Endothelial cell of umbilical vein (primary cell): ENCODE measurements at regions of chr9 and their contacts with region 1.

Region 1: GRCh38 chr9:129177791-129178559 is at the start of gene IER5L:
- DNase-seq: peak; percentile 90
- H3K4me3 ChIP-seq: peak within 1 kb of the TSS; percentile 74 to 81 (median 79)
- H3K27ac ChIP-seq: no peak within 1 kb of the TSS
- H3K4me1 ChIP-seq: peaks cover 21% of the 10 kb centered on the region
- H3K27me3 ChIP-seq: no peaks in the 10 kb centered on the region
- CTCF ChIP-seq: no peak
- POLR2A ChIP-seq: peak; percentile 100
- total RNA-seq, gene IER5L: 12.3 and 13.3 TPM in 2 replicates

Region 2: GRCh38 chr9:129036923-129037766 is 140.8 kb before region 1 on chr9:
- CTCF ChIA-PET with region 1: no interaction called
- POLR2A ChIA-PET with region 1: no interaction called
- dilution Hi-C with region 1: no loop called
- intact Hi-C with region 1: no loop called
- DNase-seq: no peak
- H3K4me3 ChIP-seq: peak overlapping the region; percentile 68 to 98 (median 73)
- H3K27ac ChIP-seq: no peak overlapping the region
- H3K4me1 ChIP-seq: peaks cover 11% of the 10 kb centered on the region
- H3K27me3 ChIP-seq: no peaks in the 10 kb centered on the region
- CTCF ChIP-seq: no peak
- POLR2A ChIP-seq: no peak

Region 3: GRCh38 chr9:129131300-129132145 is 46.5 kb before region 1 on chr9:
- CTCF ChIA-PET with region 1: interaction called, 27 read pairs
- POLR2A ChIA-PET with region 1: no interaction called
- dilution Hi-C with region 1: no loop called
- intact Hi-C with region 1: no loop called
- DNase-seq: peak; percentile 65
- H3K4me3 ChIP-seq: no peak overlapping the region
- H3K27ac ChIP-seq: no peak overlapping the region
- H3K4me1 ChIP-seq: peaks cover 12% of the 10 kb centered on the region
- H3K27me3 ChIP-seq: no peaks in the 10 kb centered on the region
- CTCF ChIP-seq: peak; percentile 96 to 99
- POLR2A ChIP-seq: no peak

Region 4: DNA sequence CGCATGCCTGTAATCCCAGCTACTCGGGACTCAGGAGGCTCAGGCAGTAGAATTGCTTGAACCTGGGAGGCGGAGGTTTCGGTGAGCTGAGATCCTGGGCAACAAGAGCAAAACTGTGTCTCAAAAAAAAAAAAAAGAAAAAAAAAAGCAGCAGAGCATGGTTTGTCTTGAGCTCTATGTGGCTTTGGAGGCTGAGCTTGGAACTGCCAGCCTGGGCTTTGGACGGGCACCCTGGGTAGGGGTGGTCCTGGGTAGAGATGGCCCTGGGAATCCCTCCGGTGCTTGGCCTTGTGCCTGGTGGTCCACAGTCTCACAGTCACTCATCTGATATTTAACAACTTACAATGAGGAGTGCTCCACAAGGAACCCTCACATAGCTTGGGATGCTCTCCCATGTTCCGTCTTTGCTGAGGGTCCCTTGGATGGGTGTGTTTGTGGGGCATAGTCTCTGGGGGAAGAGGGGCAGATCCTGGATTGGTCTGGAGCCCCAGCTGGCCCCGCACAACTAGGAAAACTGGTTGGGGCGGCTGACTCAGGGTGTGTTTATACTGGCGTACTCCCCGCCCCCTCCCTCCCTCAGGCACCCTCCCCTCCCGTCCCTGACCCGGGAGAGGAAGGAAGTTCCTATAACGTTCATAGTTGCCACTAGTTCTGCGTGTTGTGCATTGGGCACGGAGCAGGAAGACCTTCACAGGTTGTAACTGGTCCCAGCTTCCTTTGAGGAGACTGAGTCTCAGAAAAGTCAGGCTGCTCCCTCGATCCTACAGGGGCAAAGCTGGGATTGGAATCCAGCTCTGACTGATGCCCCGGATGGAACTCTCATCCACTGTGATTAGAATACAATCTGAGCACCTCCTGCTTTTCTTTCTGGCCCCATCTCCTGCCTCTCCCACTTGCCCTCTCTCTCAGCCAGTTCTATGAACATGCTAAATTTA is 11.1 kb before region 1 on chr9:
- CTCF ChIA-PET with region 1: interaction called, 16 read pairs
- POLR2A ChIA-PET with region 1: interaction called, 9 read pairs
- dilution Hi-C with region 1: no loop called
- intact Hi-C with region 1: no loop called
- DNase-seq: peak; percentile 90
- H3K4me3 ChIP-seq: no peak overlapping the region
- H3K27ac ChIP-seq: peak overlapping the region; percentile 88
- H3K4me1 ChIP-seq: peaks cover 31% of the 10 kb centered on the region
- H3K27me3 ChIP-seq: no peaks in the 10 kb centered on the region
- CTCF ChIP-seq: no peak
- POLR2A ChIP-seq: peak; percentile 66

Region 5: GRCh38 chr9:129320575-129321263 is 142.7 kb after region 1 on chr9:
- CTCF ChIA-PET with region 1: interaction called, 10 read pairs
- POLR2A ChIA-PET with region 1: interaction called, 3 read pairs
- dilution Hi-C with region 1: no loop called
- intact Hi-C with region 1: loop called (anchors 5 kb)
- DNase-seq: peak; percentile 66
- H3K4me3 ChIP-seq: peak overlapping the region in 2 of 3 experiments; percentile 15 to 29
- H3K27ac ChIP-seq: no peak overlapping the region
- H3K4me1 ChIP-seq: peaks cover 8% of the 10 kb centered on the region
- H3K27me3 ChIP-seq: no peaks in the 10 kb centered on the region
- CTCF ChIP-seq: no peak
- POLR2A ChIP-seq: no peak

Region 6: DNA sequence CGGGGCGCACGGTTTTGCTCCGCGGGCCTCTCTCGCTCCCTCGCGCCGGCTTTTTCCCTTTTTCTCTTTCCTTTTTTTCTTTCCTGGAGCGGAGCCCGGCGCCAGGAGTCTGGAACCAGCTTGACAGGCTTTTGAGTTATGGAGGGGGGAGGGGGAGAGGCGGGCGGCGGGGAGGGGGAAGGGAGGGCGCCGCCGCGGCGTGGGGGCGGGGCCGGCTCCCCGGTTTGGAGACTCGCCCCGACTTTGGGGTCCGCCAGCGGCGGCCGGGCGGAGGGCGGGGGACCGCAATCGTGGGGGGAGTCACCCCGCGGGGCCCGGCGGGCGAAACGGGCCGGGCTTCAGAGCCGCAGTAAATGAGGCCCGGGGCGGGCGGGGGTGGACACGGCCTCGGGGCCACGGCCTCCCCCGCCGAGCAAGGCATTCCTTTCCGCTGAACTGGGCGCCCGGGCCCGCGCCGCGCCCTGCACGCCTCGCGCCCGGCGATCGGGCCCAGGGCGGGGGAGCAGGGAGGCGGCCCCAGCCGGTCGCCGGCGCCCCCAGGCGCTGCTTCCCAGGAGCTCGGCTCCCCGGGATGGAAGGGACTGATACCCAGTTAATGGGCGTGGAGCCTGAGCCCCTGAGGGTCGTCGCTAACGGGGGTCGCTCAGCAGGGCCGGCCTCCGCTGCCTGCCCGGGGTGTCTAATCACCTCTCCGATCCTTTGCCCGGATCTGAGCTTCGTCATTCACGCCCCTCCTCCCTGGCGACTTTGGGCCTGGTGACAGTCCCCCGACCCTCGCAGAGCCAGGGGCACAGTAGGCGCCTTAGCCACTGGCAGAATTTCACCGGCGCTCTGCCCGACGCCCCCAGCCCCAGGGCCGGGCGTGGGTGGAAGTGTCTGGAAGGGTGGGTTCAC is 304.8 kb after region 1 on chr9:
- CTCF ChIA-PET with region 1: interaction called, 20 read pairs
- POLR2A ChIA-PET with region 1: interaction called, 8 read pairs
- dilution Hi-C with region 1: no loop called
- intact Hi-C with region 1: loop called (anchors 2 kb)
- DNase-seq: peak; percentile 69
- H3K4me3 ChIP-seq: peak overlapping the region in 1 of 3 experiments; percentile 40
- H3K27ac ChIP-seq: peak overlapping the region; percentile 93
- H3K4me1 ChIP-seq: peaks cover 31% of the 10 kb centered on the region
- H3K27me3 ChIP-seq: no peaks in the 10 kb centered on the region
- CTCF ChIP-seq: no peak
- POLR2A ChIP-seq: no peak

Region 7: DNA sequence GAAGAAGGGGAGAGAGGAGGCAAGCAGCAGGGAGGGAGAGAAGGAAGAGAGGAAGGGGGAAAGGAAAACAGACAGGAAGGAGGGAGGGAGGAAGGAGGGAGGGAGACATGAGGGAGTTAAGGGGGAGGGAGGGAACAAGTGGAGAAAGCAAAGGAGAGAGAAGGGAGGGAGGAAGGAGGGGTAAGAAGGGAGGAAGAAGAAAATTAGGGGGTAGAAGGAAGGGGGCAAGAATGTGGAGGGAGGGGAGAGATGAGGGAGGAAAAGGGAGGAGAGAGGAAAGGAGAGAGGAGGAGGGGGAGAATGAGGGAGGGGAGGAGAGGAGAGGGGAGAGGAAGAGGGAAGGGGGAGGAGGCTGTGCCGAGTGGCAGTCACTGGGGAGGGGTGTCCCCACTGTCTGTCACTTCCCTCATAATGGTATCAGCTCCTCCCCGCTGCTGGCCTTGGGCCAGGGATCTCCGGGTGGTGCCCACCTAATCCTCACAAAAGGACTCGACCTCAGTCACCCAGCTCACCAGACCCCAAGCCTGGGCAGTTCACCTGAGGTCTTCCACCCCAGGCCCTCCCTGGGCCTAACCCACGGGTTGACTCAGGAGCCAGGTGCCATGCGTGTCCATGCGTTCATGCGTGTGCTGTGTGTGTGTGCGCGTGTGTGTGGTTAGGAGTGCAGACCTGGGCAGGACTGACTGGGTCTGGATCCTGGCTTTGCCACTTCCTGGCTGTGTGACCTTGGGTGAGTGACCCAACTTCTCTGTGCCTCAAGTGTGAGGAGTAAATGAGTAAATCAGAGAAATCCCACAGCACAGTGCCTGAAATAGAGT is 424.8 kb after region 1 on chr9:
- CTCF ChIA-PET with region 1: interaction called, 18 read pairs
- POLR2A ChIA-PET with region 1: interaction called, 4 read pairs
- dilution Hi-C with region 1: no loop called
- intact Hi-C with region 1: no loop called
- DNase-seq: no peak
- H3K4me3 ChIP-seq: no peak overlapping the region
- H3K27ac ChIP-seq: no peak overlapping the region
- H3K4me1 ChIP-seq: peaks cover 9% of the 10 kb centered on the region
- H3K27me3 ChIP-seq: no peaks in the 10 kb centered on the region
- CTCF ChIP-seq: no peak
- POLR2A ChIP-seq: no peak

Region 8: GRCh38 chr9:129626079-129626624 is 448.2 kb after region 1 on chr9 and contains the start of gene NTMT1:
- CTCF ChIA-PET with region 1: interaction called, 40 read pairs
- POLR2A ChIA-PET with region 1: interaction called, 4 read pairs
- dilution Hi-C with region 1: no loop called
- intact Hi-C with region 1: loop called (anchors 1 kb)
- DNase-seq: peak; percentile 84
- H3K4me3 ChIP-seq: peak within 1 kb of the TSS; percentile 35 to 76 (median 71)
- H3K27ac ChIP-seq: peak within 1 kb of the TSS; percentile 71
- H3K4me1 ChIP-seq: peaks cover 16% of the 10 kb centered on the region
- H3K27me3 ChIP-seq: no peaks in the 10 kb centered on the region
- CTCF ChIP-seq: no peak
- POLR2A ChIP-seq: peak; percentile 93
- total RNA-seq, gene NTMT1: 47.6 and 53.2 TPM in 2 replicates

Region 9: DNA sequence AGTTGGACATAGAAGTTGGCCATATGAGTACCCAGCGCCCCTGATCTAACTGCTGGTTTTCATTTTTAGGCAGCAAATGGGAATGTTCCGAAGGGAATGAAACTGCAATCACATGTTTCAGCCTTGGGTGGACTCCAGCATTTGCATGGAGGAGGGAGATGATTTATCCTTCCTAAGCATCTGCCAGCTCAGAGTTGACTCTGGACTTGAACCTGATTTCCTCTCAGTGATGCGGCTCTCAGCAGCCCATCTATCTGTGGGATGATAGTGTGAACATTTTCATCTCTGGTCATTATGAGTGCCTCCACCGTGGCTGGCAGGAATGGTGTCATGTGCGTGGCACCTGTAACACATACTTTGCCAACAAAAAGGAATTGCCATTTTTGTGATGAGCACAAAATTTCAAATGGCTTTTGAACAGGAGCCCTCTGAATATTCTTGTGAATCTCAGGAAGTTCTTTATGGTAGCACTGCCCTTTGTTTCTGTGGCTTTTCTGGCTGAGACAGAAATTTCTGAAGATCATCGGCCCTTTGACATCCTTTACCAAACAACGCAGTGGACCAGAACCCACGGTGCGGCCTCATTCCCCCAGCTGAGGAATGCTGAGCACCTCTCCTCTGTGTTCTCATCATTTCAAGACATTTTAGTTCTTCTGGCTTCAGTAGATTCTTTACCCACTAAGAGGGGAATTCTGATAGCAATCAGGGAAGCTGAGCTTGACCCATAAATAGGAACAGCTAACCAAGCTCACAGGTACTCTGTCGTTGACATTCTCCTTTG is 1429.9 kb after region 1 on chr9:
- CTCF ChIA-PET with region 1: no interaction called
- POLR2A ChIA-PET with region 1: no interaction called
- dilution Hi-C with region 1: no loop called
- intact Hi-C with region 1: no loop called
- DNase-seq: no peak
- H3K4me3 ChIP-seq: no peak overlapping the region
- H3K27ac ChIP-seq: no peak overlapping the region
- H3K4me1 ChIP-seq: no peaks in the 10 kb centered on the region
- H3K27me3 ChIP-seq: no peaks in the 10 kb centered on the region
- CTCF ChIP-seq: no peak
- POLR2A ChIP-seq: no peak